Heart left ventricle (tissue), 16 donors: ENCODE measurements at regions of chr3 and their contacts with region 1.

Region 1: GRCh38 chr3:115092220-115092791 is 54.8 kb downstream of the ZBTB20 start:
- DNase-seq: peak; percentile 50 to 79 (median 70)
- ATAC-seq: peak; percentile 95 to 98 (median 98)
- H3K4me3 ChIP-seq: no peak overlapping the region
- H3K27ac ChIP-seq: peak overlapping the region in 5 of 12 donors; percentile 5 to 41 (median 16)
- H3K4me1 ChIP-seq: peaks cover 0 to 65% (median 20%) of the 10 kb centered on the region in 12 donors
- H3K27me3 ChIP-seq: no peaks in the 10 kb centered on the region
- CTCF ChIP-seq: peak; percentile 50 to 82 (median 68)
- POLR2A ChIP-seq: no peak

Region 2: DNA sequence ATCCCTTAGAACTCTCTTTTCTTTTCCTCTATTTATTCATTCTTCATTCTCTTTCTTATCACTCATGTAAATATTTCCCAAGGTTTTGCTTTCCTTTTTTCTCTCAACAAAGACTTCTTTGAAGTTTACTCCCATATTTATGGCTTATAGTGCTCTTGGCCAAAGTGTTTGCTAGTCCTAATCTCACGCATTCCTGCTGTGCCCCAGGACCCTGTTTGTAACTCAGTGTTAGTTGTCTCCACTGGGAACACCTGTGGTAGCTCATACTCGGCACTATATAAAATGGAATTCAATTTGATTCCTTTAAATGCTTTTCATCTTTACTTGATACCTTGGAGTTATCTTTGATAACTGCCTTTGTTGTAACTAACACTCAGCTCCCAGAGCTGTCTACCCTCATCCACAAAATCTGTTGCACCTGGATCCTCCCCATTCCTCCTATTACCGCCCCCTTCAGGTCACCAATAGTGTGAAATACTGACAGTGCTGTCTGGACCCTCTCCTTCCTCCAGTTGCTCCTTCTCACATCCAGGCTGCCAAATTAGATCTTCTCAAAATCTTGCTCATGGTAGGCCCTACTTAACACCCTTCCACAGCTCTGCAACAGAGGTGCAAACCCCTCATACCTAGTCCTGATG is 721.6 kb before region 1 on chr3:
- intact Hi-C with region 1: loop called in 4 of 10 experiments (anchors 5 to 10 kb)
- DNase-seq: no peak
- ATAC-seq: no peak
- H3K4me3 ChIP-seq: no peak overlapping the region
- H3K27ac ChIP-seq: no peak overlapping the region
- H3K4me1 ChIP-seq: peaks cover 0 to 37% (median 19%) of the 10 kb centered on the region in 12 donors
- H3K27me3 ChIP-seq: no peaks in the 10 kb centered on the region
- CTCF ChIP-seq: peak in 2 of 12 donors; percentile 3 to 10
- POLR2A ChIP-seq: no peak

Region 3: GRCh38 chr3:115040673-115041286 is 51.5 kb before region 1 on chr3:
- intact Hi-C with region 1: loop called in 3 of 10 experiments (anchors 5 to 10 kb)
- DNase-seq: peak in 2 of 5 donors; percentile 8 to 26
- ATAC-seq: peak in 1 of 4 donors; percentile 41
- H3K4me3 ChIP-seq: no peak overlapping the region
- H3K27ac ChIP-seq: no peak overlapping the region
- H3K4me1 ChIP-seq: peaks cover 0 to 23% (median 4%) of the 10 kb centered on the region in 12 donors
- H3K27me3 ChIP-seq: no peaks in the 10 kb centered on the region
- CTCF ChIP-seq: peak; percentile 41 to 72 (median 61)
- POLR2A ChIP-seq: no peak

Region 4: DNA sequence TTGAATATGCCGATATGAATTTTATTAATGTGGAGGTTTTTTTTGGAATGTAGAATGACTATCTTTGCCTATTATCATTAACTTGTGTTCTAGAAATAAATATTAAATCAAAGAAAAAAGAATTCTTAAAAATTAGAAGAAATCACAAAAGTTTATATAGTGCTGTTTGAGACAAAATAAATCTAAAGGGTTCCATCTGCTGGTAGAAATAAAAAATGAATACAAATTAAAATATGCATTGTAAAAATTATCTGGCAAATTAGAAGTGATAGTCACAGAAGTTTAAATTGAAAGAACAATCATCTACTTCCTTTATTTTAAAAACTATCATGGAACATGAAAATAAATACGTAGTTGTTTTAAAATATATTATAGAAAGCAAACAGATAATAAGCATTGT is 77.5 kb after region 1 on chr3:
- intact Hi-C with region 1: loop called in 6 of 10 experiments (anchors 2 to 5 kb)
- DNase-seq: no peak
- ATAC-seq: no peak
- H3K4me3 ChIP-seq: no peak overlapping the region
- H3K27ac ChIP-seq: no peak overlapping the region
- H3K4me1 ChIP-seq: no peaks in the 10 kb centered on the region
- H3K27me3 ChIP-seq: no peaks in the 10 kb centered on the region
- CTCF ChIP-seq: peak; percentile 17 to 66 (median 46)
- POLR2A ChIP-seq: no peak

Region 5: GRCh38 chr3:115401298-115401697 is 309.0 kb after region 1 on chr3:
- intact Hi-C with region 1: no loop called
- DNase-seq: no peak
- ATAC-seq: peak in 3 of 4 donors; percentile 53 to 94 (median 71)
- H3K4me3 ChIP-seq: no peak overlapping the region
- H3K27ac ChIP-seq: peak overlapping the region in 6 of 12 donors; percentile 47 to 61 (median 54)
- H3K4me1 ChIP-seq: peaks cover 0 to 7% (median 0%) of the 10 kb centered on the region in 12 donors
- H3K27me3 ChIP-seq: no peaks in the 10 kb centered on the region
- CTCF ChIP-seq: no peak
- POLR2A ChIP-seq: no peak